Panc1 (cell line): ENCODE measurements at regions of chr1 and their contacts with region 1.

Region 1: GRCh38 chr1:3727042-3727824 is 25.0 kb upstream of the CCDC27 start:
- DNase-seq: no peak
- ATAC-seq: peak; percentile 85
- H3K4me3 ChIP-seq: no peak overlapping the region
- H3K27ac ChIP-seq: no peak overlapping the region
- H3K4me1 ChIP-seq: no peaks in the 10 kb centered on the region; the same call in 1 of the 2 replicates
- H3K27me3 ChIP-seq: no peaks in the 10 kb centered on the region
- CTCF ChIP-seq: peak; percentile 89

Region 2: DNA sequence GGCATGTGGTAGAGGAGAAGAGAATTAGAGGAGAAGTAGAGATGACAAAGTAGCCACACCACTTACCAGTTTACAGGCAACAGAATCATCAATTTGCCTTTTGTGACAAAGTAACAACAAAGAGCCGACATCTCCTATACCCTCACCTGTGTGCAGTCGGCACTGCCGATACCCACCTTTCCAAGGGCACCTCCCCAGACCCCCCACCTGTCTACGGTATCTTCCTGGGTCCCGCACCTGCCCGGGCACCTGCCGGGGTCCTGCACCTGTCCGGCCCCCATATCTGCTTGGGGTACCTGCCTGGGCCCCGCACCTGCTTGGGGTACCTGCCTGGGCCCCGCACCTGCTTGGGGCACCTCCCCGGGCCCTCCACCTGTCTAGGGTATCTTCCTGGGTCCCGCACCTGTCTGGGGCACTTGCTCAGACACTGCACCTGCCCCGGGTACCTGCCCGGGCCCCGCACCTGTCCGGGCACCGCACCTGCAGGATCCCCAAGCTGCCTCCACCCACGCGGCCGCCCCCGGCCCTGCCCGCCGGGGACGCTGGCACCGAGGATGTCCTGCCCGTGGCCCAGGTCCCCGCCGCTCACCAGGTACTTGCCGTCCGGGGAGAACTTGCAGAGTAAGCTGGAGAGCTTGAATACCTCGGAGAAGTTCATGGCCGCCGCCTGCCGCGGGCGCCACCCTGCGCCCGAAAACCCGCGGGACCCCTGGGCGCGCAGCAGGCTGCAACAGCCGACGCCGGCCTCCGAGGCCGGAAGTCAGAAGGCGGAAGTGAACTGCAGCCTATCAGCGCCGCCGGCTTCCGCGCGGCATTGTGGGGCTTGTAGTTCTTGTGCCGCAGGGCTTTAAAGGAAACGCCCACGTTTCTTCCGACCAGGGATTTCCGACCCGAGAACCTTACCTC is 77.6 kb before region 1 on chr1 and contains the start of gene WRAP73:
- CTCF ChIA-PET with region 1: interaction called, 4 read pairs
- POLR2A ChIA-PET with region 1: no interaction called
- in situ Hi-C with region 1: no loop called
- intact Hi-C with region 1: loop called (anchors 10 kb)
- DNase-seq: peak; percentile 58
- ATAC-seq: peak; percentile 90
- H3K4me3 ChIP-seq: peak within 1 kb of the TSS; percentile 76 to 96
- H3K27ac ChIP-seq: peak within 1 kb of the TSS; percentile 82
- H3K4me1 ChIP-seq: peaks cover 11% of the 10 kb centered on the region
- H3K27me3 ChIP-seq: no peaks in the 10 kb centered on the region
- CTCF ChIP-seq: no peak
- total RNA-seq, gene WRAP73: 27.1 TPM

Region 3: GRCh38 chr1:3695326-3696217 is 31.7 kb before region 1 on chr1:
- CTCF ChIA-PET with region 1: interaction called, 13 read pairs
- POLR2A ChIA-PET with region 1: no interaction called
- in situ Hi-C with region 1: no loop called
- intact Hi-C with region 1: loop called (anchors 1 kb)
- DNase-seq: no peak
- ATAC-seq: peak; percentile 95
- H3K4me3 ChIP-seq: peak overlapping the region; percentile 27 to 49
- H3K27ac ChIP-seq: no peak overlapping the region
- H3K4me1 ChIP-seq: peaks cover 7% of the 10 kb centered on the region; the same call in 1 of the 2 replicates
- H3K27me3 ChIP-seq: no peaks in the 10 kb centered on the region
- CTCF ChIP-seq: peak; percentile 95